ENCODE measurements at regions of chr7 and their contacts with region 1.

Region 1: DNA sequence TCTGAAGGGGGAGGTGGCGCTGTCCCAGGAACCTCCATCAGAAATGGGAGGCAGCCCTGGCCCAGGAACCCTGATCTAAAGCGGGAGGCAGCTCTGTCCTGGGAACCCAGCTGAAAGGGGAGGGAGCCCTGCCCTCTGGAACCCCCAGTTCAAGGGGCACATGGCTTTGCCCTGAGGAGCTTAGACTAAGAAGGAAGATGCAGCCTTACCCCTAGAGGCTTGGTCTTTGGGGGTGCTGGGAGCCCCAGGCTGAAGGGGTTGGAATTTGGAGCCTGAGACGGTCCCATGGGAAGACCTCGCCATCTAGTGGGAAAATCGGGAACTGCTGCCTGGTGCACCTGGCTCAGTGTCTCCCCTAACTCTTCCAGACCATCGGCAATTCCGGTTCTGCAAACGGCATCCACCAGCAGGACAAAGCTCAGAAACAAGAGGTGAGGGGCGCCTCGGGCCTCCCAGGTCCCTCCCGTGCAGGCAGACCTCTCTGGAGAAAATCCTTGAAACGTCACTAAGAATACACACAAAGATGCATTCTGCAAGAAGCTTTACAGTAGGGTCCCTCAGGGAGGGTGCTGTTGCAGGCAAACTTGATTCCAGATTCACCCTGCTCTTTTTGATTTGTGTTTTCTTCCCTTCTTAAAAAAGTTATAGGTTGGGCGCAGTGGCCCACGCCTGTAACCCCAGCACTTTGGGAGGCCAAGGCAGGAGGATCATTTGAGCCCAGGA is 52.4 kb upstream of the GTF2IRD1 start:
- DNase-seq: peak; percentile 72
- ATAC-seq: peak; percentile 51 to 62

Region 2: DNA sequence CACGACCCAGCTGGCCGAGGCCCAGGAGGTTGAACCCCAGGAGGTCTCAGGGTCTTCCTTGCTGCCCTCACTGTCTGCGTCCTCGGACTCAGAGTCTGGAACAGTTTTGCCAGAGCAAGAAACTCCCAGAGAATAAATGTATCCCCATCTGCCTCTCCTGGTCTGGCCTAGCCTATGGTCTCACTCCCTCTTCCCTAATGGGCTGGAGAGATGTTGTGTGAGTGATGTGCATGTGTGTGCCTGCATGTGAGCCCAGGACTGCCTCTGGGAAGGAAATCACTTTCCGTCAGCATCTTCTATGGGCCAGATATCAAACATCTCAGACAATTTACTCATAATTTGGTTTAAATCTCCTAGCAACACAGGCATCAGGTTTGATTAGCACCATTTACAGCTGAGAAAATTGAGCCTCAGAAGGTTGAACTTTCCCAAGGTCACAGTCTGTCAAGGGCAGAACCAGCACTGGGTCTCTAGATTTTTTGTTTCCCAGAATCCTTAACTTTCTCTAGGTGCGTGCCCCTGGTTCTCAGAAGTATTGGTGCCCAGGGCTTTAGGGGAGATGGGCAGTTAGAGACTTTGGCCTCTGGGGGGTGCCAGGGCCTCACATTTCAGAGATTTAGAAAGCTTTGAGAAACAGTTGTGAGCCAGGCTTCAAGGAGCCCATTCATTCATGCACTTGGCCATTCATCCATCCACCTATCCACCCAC is 535.4 kb before region 1 on chr7:
- intact Hi-C with region 1: loop called in 1 of 2 experiments (anchors 10 kb)
- DNase-seq: peak; percentile 67
- ATAC-seq: peak; percentile 64 to 71

Region 3: DNA sequence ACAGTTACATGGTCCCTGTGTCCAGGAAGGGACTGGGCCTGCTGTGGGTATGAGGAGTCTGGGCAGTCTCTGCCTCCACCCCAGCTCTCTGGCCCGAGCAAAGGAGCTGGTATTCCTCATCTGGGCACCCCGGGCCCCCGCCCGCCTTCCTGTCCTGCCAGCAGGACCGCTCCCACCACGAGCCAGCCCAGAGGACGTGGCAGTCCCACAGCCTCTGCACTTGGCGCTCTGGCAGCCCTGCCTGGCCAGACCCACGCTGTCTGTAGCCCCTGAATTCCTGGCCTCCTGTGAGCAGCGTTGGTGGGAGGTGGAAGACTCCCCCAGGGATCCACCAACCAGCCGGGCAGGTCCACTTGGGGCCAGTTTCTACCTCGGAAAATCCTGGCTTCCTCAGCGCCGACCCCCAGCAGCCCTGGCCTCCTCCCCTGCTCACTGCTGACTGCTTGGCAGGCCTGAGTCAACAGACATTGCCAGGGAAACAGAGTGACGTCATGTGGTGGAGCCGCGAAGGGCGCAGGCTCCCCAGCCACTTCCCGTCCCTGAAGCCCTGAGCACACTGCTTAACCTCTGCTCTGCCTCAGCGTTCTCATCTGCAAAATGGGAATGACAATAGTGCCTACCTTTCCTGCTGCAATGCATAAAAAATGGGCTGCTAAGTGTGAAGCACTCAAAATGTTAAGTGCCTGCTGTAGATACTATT is 339.3 kb before region 1 on chr7:
- intact Hi-C with region 1: loop called in 1 of 2 experiments (anchors 10 kb)
- DNase-seq: peak; percentile 89
- ATAC-seq: peak; percentile 88 to 92

Region 4: GRCh38 chr7:74068393-74069085 is 332.8 kb before region 1 on chr7:
- intact Hi-C with region 1: loop called (anchors 2 to 10 kb)
- DNase-seq: no peak
- ATAC-seq: peak in 1 of 2 donors; percentile 3

Region 5: DNA sequence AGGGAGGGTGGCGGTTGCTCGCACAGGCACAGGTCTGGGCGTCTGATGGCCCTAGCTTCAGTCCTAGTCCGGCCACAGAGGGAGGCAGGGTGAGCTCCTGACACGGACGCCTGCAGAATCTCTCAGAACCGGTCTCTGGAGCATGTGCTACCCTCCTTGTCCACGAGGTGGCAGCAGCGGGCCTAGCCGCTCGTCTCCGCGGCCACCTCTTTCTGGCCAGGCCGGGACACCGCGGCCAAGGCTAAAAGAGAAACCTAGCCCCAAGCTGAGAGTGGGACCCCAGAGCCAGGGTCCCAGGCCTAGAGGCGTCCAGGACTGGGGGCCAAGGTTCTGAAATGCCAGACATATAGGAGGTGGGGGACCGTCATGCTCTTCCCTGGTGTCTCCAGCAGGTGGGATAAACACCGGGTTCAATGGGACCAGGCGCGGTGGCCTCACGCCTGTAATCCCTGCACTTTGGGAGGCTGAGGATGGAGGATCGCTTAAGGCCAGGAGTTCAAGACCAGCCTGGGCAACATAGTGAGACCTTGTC is 194.6 kb before region 1 on chr7:
- intact Hi-C with region 1: loop called (anchors 1 to 5 kb)
- DNase-seq: peak; percentile 88
- ATAC-seq: peak; percentile 74 to 80

Region 6: DNA sequence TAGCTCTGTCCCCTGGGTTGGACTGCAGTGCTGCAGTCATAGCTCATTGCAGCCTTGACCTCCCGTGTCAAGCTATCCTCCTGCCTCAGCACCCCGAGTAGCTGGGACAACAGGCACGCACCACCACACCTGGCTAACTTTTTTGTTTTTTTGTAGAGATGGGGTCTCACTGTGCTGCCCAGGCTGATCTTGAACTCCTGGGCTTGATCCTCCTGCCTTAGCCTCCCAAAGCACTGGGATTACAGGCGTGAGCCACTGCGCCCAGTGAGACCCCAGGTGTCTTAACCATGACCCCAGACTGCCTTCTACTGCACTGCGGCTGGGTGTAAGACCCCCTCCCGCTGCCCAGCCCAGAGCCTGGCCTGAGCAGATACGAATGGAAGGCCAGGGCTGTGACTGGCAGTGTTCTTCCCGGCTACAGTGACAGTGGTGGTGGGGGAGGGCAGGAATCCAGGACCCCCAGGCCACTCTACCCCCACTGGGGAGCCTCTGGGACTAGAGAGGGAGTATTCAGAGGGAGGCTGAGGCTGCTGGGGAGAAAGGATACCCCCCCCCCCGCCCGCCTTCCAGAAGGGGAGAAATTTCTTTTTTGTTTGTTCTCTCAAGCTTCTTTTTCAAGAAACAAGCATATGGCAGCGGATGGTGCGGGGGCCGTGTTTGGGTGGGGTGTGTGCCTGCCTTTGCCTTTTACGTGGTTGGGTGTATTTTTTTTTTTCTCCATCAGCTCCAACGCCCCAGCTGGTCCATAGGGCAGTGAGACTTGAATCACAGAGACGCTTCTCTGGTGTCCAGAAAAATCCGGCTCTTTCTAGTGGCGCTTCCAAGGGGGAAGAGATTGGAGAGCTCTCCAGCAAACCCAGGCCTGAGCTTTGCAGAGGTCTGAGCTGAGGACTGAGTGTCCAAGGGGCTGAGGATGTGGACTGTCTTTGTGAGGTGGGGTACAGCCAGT is 89.0 kb after region 1 on chr7:
- intact Hi-C with region 1: no loop called
- DNase-seq: no peak
- ATAC-seq: peak in 1 of 2 donors; percentile 45

Measured in left cardiac atrium (tissue), 4 donors.